MCF 10A (cell line): ENCODE measurements at regions of chr14 and their contacts with region 1.

Region 1: GRCh38 chr14:68961781-68962584 is 17.1 kb downstream of the ACTN1 start:
- DNase-seq: peak; percentile 87
- H3K4me3 Mint-ChIP-seq: no peak overlapping the region
- H3K27ac Mint-ChIP-seq: peak overlapping the region; percentile 85
- H3K4me1 Mint-ChIP-seq: peaks cover 51% of the 10 kb centered on the region
- H3K27me3 Mint-ChIP-seq: no peaks in the 10 kb centered on the region
- CTCF ChIP-seq: no peak

Region 2: GRCh38 chr14:68951042-68951914 is 10.7 kb before region 1 on chr14:
- CTCF ChIA-PET with region 1: interaction called, 5 read pairs
- POLR2A ChIA-PET with region 1: interaction called, 43 read pairs
- intact Hi-C with region 1: no loop called
- DNase-seq: peak; percentile 100
- H3K4me3 Mint-ChIP-seq: peak overlapping the region; percentile 56
- H3K27ac Mint-ChIP-seq: peak overlapping the region; percentile 95
- H3K4me1 Mint-ChIP-seq: peaks cover 75% of the 10 kb centered on the region
- H3K27me3 Mint-ChIP-seq: no peaks in the 10 kb centered on the region
- CTCF ChIP-seq: no peak